ENCODE measurements at regions of chr18 and their contacts with region 1.

Region 1: DNA sequence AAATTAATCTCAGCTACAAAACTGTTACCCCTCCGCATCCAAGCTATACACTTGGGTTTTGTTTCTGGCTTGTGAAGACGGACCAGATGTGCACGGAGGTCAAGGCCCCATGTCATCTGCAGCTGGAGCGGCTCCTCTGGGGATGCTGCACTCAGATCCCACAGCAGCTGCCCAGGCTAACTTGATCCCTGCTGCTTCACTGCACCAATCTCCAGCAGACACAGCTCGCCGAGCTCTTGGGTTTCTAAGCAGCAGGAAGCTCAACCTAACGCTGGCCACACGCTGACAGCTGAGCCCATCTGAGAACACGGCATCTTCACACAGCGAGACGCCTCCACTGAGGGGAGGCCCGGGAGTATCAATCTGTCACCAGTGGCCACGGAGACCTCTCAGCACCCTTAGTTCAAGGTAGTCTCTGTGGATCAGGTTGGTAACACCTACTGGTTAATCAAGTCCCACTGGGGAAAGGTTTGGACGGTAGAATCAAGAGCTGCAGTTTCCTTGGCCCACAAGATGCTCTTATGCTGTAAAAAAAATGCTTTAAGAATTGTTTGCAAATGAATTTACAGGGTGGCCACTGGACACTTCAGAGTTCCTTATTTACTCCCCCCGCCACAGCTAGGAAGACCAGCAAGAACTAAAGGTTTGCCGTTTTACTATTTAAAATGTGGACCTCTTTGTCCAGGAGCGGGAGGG is 67.5 kb downstream of the EMILIN2 start:
- DNase-seq: no peak
- ATAC-seq: no peak
- H3K4me3 ChIP-seq: no peak overlapping the region
- H3K27ac ChIP-seq: no peak overlapping the region
- H3K4me1 ChIP-seq: no peaks in the 10 kb centered on the region
- CTCF ChIP-seq: no peak
- EP300 ChIP-seq: no peak
- POLR2A ChIP-seq: no peak
- RAD21 ChIP-seq: no peak

Region 2: GRCh38 chr18:2932247-2933181 is 18.2 kb after region 1 on chr18:
- CTCF ChIA-PET with region 1: interaction called, 12 read pairs
- POLR2A ChIA-PET with region 1: no interaction called
- DNase-seq: peak; percentile 21 to 50
- ATAC-seq: peak; percentile 54 to 55; a peak in 4 of 6 replicates
- H3K4me3 ChIP-seq: no peak overlapping the region
- H3K27ac ChIP-seq: peak overlapping the region; percentile 27 to 71; a peak in 4 of 6 replicates
- H3K4me1 ChIP-seq: peaks cover 29% of the 10 kb centered on the region
- CTCF ChIP-seq: peak; percentile 77
- EP300 ChIP-seq: no peak
- POLR2A ChIP-seq: no peak
- RAD21 ChIP-seq: peak; percentile 80 to 86